Activated naive CD4-positive, alpha-beta T cell treated with anti-CD3 and anti-CD28 coated beads, Interleukin-2, amount 10 ng/mL, durations not matched to agents 7 days and 5 days (primary cell): ENCODE measurements at regions of chr5 and their contacts with region 1.

Region 1: DNA sequence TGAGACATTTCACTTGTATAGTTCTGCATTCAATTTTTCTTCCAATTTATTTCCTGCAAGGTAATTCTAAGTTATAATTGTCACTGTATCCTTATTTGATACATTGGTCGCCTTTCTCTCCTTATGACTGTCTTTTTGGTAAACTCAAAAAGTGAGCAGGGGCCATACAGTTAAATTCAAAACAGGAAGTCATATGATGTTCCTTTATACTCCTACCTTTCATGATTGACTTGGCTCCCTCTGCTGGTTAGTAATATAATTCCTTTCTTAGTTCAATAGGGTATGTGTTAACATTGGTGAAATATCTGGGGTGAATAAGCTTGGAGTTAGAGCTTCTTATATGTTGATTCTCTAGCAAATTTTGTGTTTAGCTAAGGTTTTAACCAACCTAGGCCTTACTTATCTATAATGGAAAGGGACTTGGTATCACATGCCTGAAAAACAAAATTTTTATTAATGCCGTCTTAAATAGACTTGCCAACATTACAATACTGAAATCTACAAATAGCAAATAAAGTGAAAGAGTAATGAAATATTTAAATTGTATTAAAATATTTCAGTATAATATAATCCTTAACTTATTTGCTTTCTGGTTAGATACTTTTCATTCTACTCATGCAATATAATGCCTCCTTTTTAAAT is 6.0 kb upstream of the NIPBL start:
- DNase-seq: no peak
- H3K4me3 Mint-ChIP-seq: no peak overlapping the region
- H3K27ac Mint-ChIP-seq: no peak overlapping the region
- H3K4me1 Mint-ChIP-seq: peaks cover 35% of the 10 kb centered on the region
- H3K27me3 Mint-ChIP-seq: no peaks in the 10 kb centered on the region

Region 2: DNA sequence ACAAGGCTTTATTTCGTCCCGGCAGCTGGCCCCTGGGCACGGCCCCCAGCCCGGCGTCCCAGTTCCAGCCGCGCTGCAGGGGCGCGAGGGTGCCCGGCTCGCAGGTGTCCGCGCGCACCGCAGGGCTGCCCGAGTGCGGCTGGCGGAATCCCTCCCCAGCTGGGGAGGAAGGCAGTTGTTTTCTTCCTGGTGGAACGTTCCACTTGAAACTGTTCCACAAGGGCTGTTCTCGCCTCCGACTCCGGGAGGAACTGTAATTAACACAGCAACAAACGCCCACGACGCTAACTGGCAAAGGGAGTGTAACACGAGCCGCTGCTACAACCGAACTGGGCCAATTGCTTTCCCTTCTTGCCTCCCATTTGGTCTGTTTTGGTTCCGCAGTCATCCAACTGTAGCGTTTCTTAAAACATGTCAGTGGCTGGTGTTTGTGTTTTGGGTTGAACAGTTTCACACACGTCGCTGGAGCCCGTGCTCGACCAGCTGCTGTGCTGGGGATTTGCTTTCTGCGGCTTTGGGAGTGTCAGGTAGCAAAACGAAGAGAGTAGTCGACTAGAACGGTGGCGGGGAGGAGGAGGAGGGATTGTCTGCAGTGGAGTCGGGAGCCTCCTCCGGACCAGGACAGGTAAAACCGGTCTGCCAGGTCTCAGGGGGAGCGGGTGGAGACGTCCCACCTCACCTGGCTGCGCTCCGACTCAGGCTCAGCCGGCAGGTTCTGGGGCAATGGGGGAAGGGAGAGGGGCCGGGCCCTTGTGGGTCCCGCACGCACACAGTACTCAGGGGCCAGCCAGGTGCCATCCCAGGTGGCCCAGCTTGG is 125.5 kb before region 1 on chr5:
- CTCF ChIA-PET with region 1: interaction called, 12 read pairs
- DNase-seq: peak; percentile 42
- H3K4me3 Mint-ChIP-seq: peak overlapping the region; percentile 77
- H3K27ac Mint-ChIP-seq: no peak overlapping the region
- H3K4me1 Mint-ChIP-seq: peaks cover 15% of the 10 kb centered on the region
- H3K27me3 Mint-ChIP-seq: peaks cover 50% of the 10 kb centered on the region